ENCODE measurements at regions of chr9 and their contacts with region 1.

Region 1: DNA sequence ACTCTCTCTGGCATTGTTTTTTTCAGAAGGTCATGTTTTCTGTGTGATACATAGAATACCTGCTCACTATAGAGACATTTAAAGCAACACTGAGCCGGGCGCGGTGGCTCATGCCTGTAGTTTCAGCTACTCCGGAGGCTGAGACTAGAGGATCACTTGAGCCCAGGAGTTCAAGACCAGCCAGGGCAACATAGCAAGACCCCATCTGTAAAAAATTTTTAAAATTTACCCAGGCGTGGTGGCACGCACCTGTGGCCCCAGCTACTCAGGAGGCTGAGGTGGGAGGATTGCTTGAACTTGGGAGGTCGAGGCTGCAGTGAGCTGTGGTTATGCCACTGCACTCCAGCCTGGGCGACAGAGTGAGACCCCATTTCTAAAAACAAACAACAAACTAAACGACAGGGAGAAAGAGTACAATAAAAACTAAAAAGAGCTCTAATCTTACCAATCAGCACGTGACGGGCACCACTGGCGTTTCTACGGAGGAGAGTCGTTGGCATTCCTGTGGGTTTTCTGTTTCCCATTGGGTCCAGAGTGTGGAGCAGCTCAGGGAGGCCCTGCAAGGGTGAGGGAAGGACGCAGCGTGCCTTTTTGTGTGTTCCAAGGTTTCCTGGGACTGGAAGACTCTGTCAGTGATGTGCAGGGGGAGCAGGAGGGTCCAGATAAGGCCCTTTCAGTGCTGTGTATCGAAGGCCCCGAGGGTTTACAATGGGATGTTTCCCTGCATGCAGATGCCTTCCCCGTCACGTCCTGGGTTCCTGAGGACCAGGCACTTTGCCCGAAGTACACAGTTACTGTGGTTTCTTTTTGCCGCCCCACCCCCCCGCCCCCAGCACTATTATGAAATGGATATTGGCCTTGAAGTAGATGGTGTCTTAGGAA is 7.2 kb upstream of the RNU6ATAC start:
- DNase-seq: peak in 1 of 3 donors; percentile 17
- H3K4me3 ChIP-seq: no peak overlapping the region
- H3K4me3 Mint-ChIP-seq: peak overlapping the region; percentile 41 to 78
- H3K27ac ChIP-seq: peak overlapping the region; percentile 52 to 58
- H3K27ac Mint-ChIP-seq: peak overlapping the region; percentile 40 to 86 (median 72)
- H3K4me1 ChIP-seq: peaks cover 0 to 9% of the 10 kb centered on the region in 2 donors
- H3K4me1 Mint-ChIP-seq: peaks cover 26% of the 10 kb centered on the region
- H3K27me3 ChIP-seq: no peaks in the 10 kb centered on the region
- H3K27me3 Mint-ChIP-seq: peaks cover 0 to 4% (median 1%) of the 10 kb centered on the region in 3 donors
- CTCF ChIP-seq: no peak

Region 2: GRCh38 chr9:132560616-132561202 is 1610.8 kb before region 1 on chr9:
- intact Hi-C with region 1: no loop called
- DNase-seq: no peak
- H3K4me3 ChIP-seq: no peak overlapping the region
- H3K4me3 Mint-ChIP-seq: peak overlapping the region in 1 of 2 donors; percentile 24
- H3K27ac ChIP-seq: no peak overlapping the region
- H3K27ac Mint-ChIP-seq: no peak overlapping the region
- H3K4me1 ChIP-seq: no peaks in the 10 kb centered on the region
- H3K4me1 Mint-ChIP-seq: no peaks in the 10 kb centered on the region
- H3K27me3 ChIP-seq: peaks cover 0 to 16% of the 10 kb centered on the region in 2 donors
- H3K27me3 Mint-ChIP-seq: peaks cover 31 to 41% (median 40%) of the 10 kb centered on the region in 3 donors
- CTCF ChIP-seq: no peak

Region 3: DNA sequence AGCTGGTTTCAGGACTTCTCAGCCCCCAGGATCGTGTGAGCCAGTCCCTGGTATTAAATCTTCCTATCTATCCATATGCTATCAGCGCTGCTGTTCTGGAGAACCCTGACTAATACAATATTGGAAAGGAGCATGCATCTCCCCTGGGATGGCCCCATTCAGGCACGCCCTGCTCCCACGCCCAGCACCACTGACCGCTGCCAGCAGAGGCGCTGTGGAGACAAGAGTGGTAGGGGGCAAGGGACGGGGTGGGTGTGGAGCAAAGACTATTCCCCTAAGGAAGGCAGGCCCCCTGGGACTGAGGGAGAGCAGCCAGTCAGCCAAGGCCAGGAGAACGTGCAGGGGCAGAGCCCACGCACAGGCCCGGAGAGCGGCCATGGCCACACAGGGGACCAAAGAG is 295.4 kb before region 1 on chr9:
- intact Hi-C with region 1: no loop called
- DNase-seq: no peak
- H3K4me3 ChIP-seq: no peak overlapping the region
- H3K4me3 Mint-ChIP-seq: no peak overlapping the region
- H3K27ac ChIP-seq: no peak overlapping the region
- H3K27ac Mint-ChIP-seq: no peak overlapping the region
- H3K4me1 ChIP-seq: no peaks in the 10 kb centered on the region
- H3K4me1 Mint-ChIP-seq: no peaks in the 10 kb centered on the region
- H3K27me3 ChIP-seq: no peaks in the 10 kb centered on the region
- H3K27me3 Mint-ChIP-seq: peaks cover 2 to 9% (median 6%) of the 10 kb centered on the region in 3 donors
- CTCF ChIP-seq: no peak

Region 4: GRCh38 chr9:134146774-134147500 is 24.6 kb before region 1 on chr9:
- intact Hi-C with region 1: no loop called
- DNase-seq: no peak
- H3K4me3 ChIP-seq: no peak overlapping the region
- H3K4me3 Mint-ChIP-seq: no peak overlapping the region
- H3K27ac ChIP-seq: no peak overlapping the region
- H3K27ac Mint-ChIP-seq: peak overlapping the region in 2 of 7 donors; percentile 35 to 36
- H3K4me1 ChIP-seq: no peaks in the 10 kb centered on the region
- H3K4me1 Mint-ChIP-seq: no peaks in the 10 kb centered on the region
- H3K27me3 ChIP-seq: no peaks in the 10 kb centered on the region
- H3K27me3 Mint-ChIP-seq: no peaks in the 10 kb centered on the region
- CTCF ChIP-seq: no peak

Region 5: DNA sequence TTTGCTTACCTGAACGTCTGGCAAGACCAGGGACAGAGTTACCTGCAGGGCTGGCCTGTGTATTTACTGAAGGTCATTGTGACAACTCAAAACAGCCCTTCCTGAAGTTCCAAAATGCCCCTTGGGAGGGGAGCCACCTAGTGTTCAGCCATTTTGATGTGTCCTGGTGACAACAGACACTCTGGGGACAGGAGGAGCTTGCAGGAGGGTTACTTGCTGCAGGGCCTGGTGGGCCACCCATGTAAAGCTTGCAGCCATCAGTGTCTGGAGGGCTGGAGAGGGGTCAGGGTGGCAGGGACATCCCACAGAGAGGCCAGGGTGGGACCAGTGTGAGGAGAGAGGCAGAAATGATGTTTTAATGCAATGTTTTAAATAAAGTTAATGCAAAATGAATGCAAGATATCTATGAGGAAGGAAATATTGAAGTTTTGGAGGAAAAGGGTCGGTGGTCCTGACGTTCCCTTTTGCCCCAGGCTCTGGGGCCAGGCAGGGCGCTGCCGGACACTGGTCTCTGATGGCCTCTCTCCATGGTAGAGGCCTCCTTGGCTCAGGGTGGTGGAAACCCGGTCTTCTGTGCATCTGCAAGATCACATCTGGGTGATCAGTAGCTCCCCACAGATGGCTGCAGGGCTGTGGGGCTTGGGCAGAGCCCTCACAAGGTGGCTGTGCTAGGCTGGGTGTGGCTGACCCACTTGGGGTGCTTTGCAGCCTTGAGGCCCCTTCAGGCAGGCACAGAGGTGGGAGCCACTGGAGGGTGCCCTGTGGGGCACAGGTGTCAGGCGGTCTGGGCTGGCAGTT is 46.5 kb after region 1 on chr9:
- intact Hi-C with region 1: no loop called
- DNase-seq: no peak
- H3K4me3 ChIP-seq: no peak overlapping the region
- H3K4me3 Mint-ChIP-seq: no peak overlapping the region
- H3K27ac ChIP-seq: no peak overlapping the region
- H3K27ac Mint-ChIP-seq: peak overlapping the region in 1 of 7 donors; percentile 13
- H3K4me1 ChIP-seq: peaks cover 9 to 11% of the 10 kb centered on the region in 2 donors
- H3K4me1 Mint-ChIP-seq: peaks cover 11% of the 10 kb centered on the region
- H3K27me3 ChIP-seq: no peaks in the 10 kb centered on the region
- H3K27me3 Mint-ChIP-seq: peaks cover 1 to 2% (median 2%) of the 10 kb centered on the region in 3 donors
- CTCF ChIP-seq: no peak

Region 6: DNA sequence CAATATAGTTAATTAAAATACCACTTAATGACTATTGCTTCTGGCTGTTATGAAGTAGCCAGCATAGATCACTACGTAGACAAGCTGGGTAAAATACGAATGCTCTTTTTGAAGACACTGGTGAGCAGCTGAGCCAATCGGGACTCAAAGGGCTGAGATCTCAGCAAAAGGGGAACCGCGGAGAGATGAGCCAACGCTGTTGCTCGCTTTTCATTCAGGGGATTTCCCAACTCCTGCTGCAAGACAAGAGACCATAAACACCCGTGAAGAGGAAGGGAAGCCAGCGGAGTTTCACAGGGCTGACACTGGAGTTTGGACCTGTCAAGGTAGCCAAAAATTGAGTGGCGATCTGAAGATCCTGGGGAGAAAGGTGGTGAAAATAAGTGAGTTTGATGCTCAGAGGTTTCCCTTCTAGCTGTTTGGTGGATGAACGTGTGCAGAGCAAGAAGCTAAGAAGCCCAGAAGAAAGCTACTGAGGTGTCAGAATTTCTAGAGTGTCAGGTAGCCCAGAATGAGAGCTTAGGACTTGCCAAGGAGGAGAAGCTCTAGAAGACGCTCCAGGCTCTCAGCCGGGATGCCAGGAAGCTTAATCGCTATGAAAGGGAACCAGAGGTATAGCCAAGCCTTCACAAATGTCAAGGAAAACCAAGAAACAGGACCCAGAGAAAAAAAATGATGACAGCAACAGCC is 72.4 kb after region 1 on chr9:
- intact Hi-C with region 1: loop called in 1 of 2 experiments (anchors 5 kb)
- DNase-seq: peak; percentile 93 to 97 (median 97)
- H3K4me3 ChIP-seq: peak overlapping the region in 1 of 3 experiments; percentile 35
- H3K4me3 Mint-ChIP-seq: peak overlapping the region in 1 of 2 donors; percentile 86
- H3K27ac ChIP-seq: peak overlapping the region; percentile 24 to 27
- H3K27ac Mint-ChIP-seq: peak overlapping the region; percentile 66 to 95 (median 90)
- H3K4me1 ChIP-seq: peaks cover 25 to 33% of the 10 kb centered on the region in 2 donors
- H3K4me1 Mint-ChIP-seq: peaks cover 34% of the 10 kb centered on the region
- H3K27me3 ChIP-seq: peaks cover 0 to 13% of the 10 kb centered on the region in 2 donors
- H3K27me3 Mint-ChIP-seq: peaks cover 21 to 25% (median 23%) of the 10 kb centered on the region in 3 donors
- CTCF ChIP-seq: no peak

Region 7: GRCh38 chr9:134316449-134317160 is 145.0 kb after region 1 on chr9:
- intact Hi-C with region 1: loop called (anchors 5 kb)
- DNase-seq: peak in 1 of 3 donors; percentile 77
- H3K4me3 ChIP-seq: no peak overlapping the region
- H3K4me3 Mint-ChIP-seq: peak overlapping the region in 1 of 2 donors; percentile 69
- H3K27ac ChIP-seq: no peak overlapping the region
- H3K27ac Mint-ChIP-seq: peak overlapping the region in 3 of 7 donors; percentile 11 to 68 (median 25)
- H3K4me1 ChIP-seq: peaks cover 3 to 7% of the 10 kb centered on the region in 2 donors
- H3K4me1 Mint-ChIP-seq: peaks cover 9% of the 10 kb centered on the region
- H3K27me3 ChIP-seq: peaks cover 0 to 19% of the 10 kb centered on the region in 2 donors
- H3K27me3 Mint-ChIP-seq: peaks cover 17 to 42% (median 18%) of the 10 kb centered on the region in 3 donors
- CTCF ChIP-seq: no peak

Region 8: GRCh38 chr9:134443168-134444037 is 271.8 kb after region 1 on chr9:
- intact Hi-C with region 1: loop called (anchors 1 to 2 kb)
- DNase-seq: peak; percentile 81 to 91 (median 85)
- H3K4me3 ChIP-seq: peak overlapping the region in 1 of 3 experiments; percentile 45
- H3K4me3 Mint-ChIP-seq: peak overlapping the region; percentile 20 to 55
- H3K27ac ChIP-seq: peak overlapping the region; percentile 80 to 81
- H3K27ac Mint-ChIP-seq: peak overlapping the region; percentile 77 to 90 (median 87)
- H3K4me1 ChIP-seq: peaks cover 50 to 58% of the 10 kb centered on the region in 2 donors
- H3K4me1 Mint-ChIP-seq: peaks cover 57% of the 10 kb centered on the region
- H3K27me3 ChIP-seq: no peaks in the 10 kb centered on the region
- H3K27me3 Mint-ChIP-seq: peaks cover 2 to 17% (median 5%) of the 10 kb centered on the region in 3 donors
- CTCF ChIP-seq: peak; percentile 99